ENCODE measurements at regions of chr9 and their contacts with region 1.

Region 1: DNA sequence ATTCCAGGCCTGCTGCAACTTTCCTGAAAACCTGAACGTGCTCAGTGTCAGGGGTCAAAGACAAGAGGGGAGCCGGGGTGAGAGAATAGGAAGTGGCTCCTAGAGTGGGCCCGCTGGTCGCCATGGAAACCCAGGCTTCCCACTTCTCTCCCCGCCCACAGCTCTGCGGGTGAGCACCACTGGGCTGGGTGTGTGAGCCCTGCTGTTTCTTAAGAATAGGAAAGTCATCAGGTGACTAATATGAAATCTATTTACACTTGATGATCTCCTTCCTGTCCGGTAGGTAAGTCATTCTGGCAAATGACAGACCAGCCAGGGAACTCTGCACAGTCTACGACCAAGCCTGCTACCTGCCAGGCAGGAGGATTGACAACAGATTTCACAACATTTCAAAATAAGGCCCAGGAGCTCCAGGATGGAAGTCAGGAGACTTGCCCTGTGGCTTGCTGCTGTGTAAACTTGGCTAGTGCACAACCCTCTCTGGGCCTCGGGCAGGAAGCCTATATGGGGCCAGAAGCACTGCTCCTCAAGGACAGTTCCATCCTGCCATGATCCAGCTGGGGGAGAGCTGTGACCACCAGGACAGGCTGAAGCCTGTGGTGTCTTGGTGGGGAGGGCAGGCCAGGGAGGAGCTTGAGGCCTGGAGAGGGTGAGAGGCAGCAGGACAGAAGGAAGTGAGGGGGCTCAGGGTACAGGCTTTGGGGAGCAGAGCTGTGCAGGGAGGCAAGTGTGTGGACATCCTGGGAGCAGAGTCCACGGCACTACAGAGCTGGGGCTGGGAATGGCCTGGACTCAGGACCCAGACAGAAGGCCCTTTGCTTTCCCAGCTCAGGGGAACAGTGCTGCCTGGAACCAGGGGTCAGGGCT is 60.6 kb downstream of the SHB start:
- DNase-seq: no peak
- H3K4me3 ChIP-seq: no peak overlapping the region
- H3K27ac ChIP-seq: peak overlapping the region in 1 of 2 donors; percentile 6
- H3K4me1 ChIP-seq: peaks cover 0 to 29% (median 7%) of the 10 kb centered on the region in 4 donors
- H3K27me3 ChIP-seq: no peaks in the 10 kb centered on the region
- CTCF ChIP-seq: no peak

Region 2: DNA sequence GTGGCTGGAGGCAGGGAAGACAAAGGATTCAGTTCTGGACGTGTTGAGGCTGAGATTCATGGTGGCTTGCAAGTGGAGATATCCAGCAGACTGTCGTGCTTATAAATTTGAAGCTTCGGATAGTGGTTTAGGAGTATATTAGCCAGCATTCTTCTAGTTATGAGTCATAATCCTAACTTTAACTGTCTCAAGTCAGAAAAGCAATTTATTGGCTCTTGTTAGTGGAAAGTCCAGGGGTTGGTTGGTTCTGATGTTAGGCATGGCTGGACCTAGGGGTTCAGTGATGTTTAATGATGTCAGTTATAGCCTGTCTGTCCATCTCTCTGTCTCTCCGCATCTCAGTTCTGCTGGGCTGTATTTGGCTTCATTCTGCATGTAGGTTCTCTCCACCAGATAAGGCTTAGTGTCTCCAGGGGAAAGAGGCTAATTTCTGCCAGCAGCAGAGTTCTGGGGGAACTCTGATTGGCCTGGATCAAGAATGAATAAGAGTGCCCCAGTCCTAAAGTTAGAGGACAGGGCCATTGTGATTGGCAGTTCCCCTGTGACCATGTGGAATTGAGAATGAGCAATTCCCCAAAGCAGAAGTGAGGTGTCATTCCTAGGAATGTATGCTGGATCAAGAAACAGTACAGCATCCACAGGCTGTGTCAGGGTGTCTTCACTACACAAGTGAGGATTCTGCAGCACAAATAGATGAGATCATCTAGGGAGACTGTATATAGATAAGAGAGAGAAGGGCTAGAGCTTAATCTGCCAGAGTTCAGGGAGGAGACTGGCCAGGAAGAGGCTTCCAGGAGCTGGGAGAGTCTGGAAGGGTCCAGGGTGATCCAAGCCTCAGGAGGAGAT is 133.6 kb after region 1 on chr9:
- intact Hi-C with region 1: loop called (anchors 10 kb)
- DNase-seq: no peak
- H3K4me3 ChIP-seq: no peak overlapping the region
- H3K27ac ChIP-seq: no peak overlapping the region
- H3K4me1 ChIP-seq: peaks cover 0 to 16% (median 11%) of the 10 kb centered on the region in 4 donors
- H3K27me3 ChIP-seq: peaks cover 0 to 3% of the 10 kb centered on the region in 2 donors
- CTCF ChIP-seq: no peak

Measured in tibial artery (tissue), 4 donors.